A673 (cell line): ENCODE measurements at regions of chr17 and their contacts with region 1.

Region 1: GRCh38 chr17:50397111-50397918 is at the start of gene LRRC59:
- DNase-seq: peak; percentile 86
- H3K4me3 ChIP-seq: peak within 1 kb of the TSS; percentile 82
- H3K27ac ChIP-seq: peak within 1 kb of the TSS; percentile 83
- H3K4me1 ChIP-seq: peaks cover 10% of the 10 kb centered on the region
- H3K27me3 ChIP-seq: no peaks in the 10 kb centered on the region
- CTCF ChIP-seq: peak; percentile 99
- total RNA-seq, gene LRRC59: 177 and 178 TPM in 2 replicates

Region 2: GRCh38 chr17:50117202-50118051 is 279.9 kb before region 1 on chr17:
- CTCF ChIA-PET with region 1: no interaction called
- POLR2A ChIA-PET with region 1: no interaction called
- intact Hi-C with region 1: no loop called
- DNase-seq: peak; percentile 44
- H3K4me3 ChIP-seq: no peak overlapping the region
- H3K27ac ChIP-seq: no peak overlapping the region
- H3K4me1 ChIP-seq: peaks cover 26% of the 10 kb centered on the region
- H3K27me3 ChIP-seq: no peaks in the 10 kb centered on the region
- CTCF ChIP-seq: peak; percentile 49

Region 3: DNA sequence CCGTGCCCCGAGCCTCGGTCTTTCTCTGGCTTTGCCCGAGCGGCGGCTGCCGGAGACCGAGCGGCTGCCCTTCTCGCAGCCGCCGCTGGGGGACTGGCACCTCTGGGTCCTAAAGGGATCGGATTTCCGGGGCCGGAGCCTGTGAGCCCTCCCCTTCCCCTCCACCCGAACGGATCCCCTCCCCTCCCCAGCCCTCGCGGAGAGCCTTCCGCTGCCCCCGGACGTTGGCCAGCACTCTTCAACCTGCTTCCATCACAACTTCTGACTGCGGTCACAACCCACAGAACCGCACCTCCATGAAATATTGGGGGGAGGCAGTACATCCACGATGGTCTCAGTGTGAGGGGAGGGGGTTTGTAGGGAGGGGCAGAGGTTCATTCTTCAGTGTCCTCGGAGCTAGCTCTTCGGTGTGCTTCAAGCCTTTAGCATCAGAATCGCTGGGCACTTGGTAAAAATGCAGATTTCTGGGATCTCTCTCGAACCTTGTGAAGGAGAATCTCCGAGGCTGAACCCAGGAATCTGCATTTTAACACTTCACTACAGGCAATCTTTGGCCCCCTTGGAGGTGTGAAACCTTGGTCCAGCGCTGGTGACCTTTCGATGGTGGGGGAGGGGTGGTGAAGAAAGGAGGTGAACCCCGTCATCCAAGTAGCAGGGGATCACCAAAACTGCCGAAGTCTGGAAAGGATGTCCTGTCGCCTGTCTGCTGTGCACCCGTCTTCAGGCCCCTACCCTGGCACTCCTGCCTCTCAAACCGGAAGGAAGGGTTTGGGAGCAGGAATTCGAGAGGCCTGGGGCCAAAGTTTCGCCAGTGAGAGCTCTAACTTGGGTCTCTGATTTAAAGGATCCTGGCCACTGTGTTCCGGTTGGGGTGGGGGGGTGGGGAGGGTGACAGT is 246.0 kb before region 1 on chr17:
- CTCF ChIA-PET with region 1: no interaction called
- POLR2A ChIA-PET with region 1: no interaction called
- intact Hi-C with region 1: no loop called
- DNase-seq: peak; percentile 95
- H3K4me3 ChIP-seq: peak overlapping the region; percentile 82
- H3K27ac ChIP-seq: peak overlapping the region; percentile 86
- H3K4me1 ChIP-seq: peaks cover 40% of the 10 kb centered on the region
- H3K27me3 ChIP-seq: no peaks in the 10 kb centered on the region
- CTCF ChIP-seq: peak; percentile 56

Region 4: DNA sequence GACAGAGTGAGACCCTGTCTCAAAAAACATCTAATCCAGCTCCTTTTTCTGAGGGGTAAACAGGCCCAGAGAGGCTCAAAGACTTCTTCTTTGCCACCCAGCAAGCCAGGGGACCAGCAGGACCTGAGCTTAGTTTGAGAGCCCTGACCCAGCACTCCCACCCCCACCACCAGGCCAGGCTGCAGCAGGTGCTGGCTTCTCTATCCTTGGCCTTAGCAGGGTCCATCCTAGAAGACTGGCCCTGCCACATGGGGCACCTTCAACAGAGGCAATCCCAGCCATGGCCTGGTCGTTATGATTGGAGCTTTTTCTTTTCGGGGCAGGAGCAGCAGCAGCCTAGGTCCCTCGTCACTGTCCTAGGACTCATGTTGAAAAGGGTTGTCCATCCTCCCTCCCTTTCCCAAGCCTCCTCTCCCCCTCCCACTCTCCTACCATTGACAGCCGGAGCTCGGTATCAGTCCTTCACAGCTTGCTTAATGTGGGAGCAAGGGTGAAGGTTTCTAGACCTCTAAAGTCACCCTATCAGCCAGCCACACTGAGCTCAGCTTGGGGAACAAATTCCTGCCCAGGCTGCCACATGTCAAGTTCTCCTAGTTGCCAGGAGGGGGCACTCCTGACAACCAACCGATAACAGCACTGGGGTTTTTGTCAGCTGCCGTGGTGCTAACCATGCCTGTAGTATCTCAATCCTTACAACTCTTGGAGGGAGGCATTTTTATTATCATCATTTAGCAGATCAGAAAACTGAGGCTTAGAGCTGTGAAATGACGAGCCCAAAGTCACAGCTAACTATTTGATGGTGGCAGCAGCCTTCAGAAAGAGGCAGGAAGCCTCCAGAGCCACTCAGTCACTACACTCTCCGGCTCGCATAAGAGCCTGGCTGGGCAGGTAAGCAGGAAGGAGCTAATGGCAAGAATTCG is 35.5 kb before region 1 on chr17:
- CTCF ChIA-PET with region 1: interaction called, 17 read pairs
- POLR2A ChIA-PET with region 1: no interaction called
- intact Hi-C with region 1: no loop called
- DNase-seq: peak; percentile 79
- H3K4me3 ChIP-seq: no peak overlapping the region
- H3K27ac ChIP-seq: no peak overlapping the region
- H3K4me1 ChIP-seq: no peaks in the 10 kb centered on the region
- H3K27me3 ChIP-seq: no peaks in the 10 kb centered on the region
- CTCF ChIP-seq: peak; percentile 84

Region 5: DNA sequence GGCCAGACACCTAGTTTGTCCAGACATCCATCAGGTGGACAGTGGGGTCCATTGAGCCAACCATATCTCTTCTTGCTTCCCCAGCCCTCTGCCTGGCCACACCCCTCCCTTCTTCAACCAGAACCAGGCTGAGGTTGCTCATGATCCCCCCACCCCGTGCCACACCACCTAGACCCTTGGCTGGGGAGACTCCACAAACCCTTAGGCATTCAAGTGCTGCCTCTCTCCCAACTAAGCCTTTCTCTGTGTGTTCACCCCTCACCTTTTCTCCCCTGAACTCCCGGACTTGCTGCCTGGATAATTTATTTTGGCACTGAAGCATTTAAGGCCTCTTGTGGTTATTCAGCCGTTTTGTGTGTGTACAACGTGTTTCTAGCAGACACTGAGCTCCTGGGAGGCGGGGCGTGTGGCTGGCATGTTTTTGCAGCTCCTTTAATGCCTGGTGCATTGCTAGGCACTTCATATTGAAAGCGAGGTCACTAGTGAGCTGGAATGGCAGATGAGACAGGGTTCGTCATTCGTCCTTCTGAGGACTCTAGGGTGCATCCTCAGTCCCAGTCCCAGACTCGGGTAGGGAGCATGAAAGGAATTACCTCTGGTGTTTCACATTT is 191.9 kb after region 1 on chr17:
- CTCF ChIA-PET with region 1: no interaction called
- POLR2A ChIA-PET with region 1: no interaction called
- intact Hi-C with region 1: no loop called
- DNase-seq: no peak
- H3K4me3 ChIP-seq: no peak overlapping the region
- H3K27ac ChIP-seq: no peak overlapping the region
- H3K4me1 ChIP-seq: no peaks in the 10 kb centered on the region
- H3K27me3 ChIP-seq: no peaks in the 10 kb centered on the region
- CTCF ChIP-seq: no peak